ENCODE measurements at regions of chr3 and their contacts with region 1.

Region 1: DNA sequence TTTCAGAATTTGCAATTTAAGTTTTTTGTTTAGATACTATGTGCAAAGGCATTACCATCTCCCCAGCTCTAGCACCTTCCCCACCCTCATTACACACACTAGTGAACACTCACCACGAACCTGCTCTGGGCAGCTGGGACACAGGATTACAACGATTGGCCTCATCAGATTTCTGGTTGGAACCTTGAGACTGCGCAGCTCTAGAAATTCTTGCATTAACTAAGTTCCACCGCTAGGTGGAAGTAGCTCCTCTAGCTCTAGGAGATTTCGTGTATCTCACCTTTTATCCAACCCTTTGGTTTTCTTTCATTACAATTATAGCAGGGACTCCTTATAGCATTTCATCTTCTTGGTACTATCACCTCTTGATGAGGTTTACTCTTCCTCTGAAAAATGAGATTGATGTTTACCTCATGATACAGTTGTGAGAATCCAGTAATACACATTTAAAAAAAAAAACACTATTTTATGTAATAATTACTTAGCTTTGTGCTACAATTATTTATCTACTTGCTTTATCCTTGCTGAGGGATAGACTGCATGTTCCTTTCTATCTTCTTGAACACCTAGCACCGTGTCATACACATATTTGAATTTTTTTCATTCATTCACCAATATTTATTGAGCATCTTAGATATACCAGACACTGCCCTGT is 28.7 kb upstream of the PLOD2 start:
- DNase-seq: no peak
- H3K4me3 ChIP-seq: no peak overlapping the region
- CTCF ChIP-seq: peak; percentile 57

Region 2: GRCh38 chr3:146026547-146026946 is 163.1 kb before region 1 on chr3:
- CTCF ChIA-PET with region 1: interaction called, 10 read pairs
- POLR2A ChIA-PET with region 1: no interaction called
- DNase-seq: no peak
- H3K4me3 ChIP-seq: no peak overlapping the region
- CTCF ChIP-seq: no peak

Region 3: DNA sequence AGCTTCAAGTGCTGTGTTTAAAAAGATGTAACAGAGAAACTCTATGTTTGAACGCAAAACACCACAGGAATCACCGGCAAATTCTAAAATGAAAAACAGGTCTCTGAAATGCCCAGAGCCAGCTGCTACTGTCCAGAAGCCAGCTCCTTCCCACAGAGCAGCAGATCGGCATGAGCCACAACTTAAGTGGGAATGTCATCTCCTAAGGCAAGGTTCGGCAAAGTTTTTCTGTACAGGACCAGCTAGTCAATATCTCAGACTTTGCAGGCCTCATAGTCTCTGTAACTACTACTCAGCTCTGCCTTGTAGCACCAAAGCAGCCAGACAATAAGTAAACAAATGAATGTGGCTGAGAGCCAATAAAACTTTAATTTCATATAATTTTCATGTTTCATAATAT is 33.6 kb before region 1 on chr3:
- CTCF ChIA-PET with region 1: interaction called, 43 read pairs
- POLR2A ChIA-PET with region 1: interaction called, 4 read pairs
- DNase-seq: no peak
- H3K4me3 ChIP-seq: peak overlapping the region; percentile 38
- CTCF ChIP-seq: no peak

Region 4: DNA sequence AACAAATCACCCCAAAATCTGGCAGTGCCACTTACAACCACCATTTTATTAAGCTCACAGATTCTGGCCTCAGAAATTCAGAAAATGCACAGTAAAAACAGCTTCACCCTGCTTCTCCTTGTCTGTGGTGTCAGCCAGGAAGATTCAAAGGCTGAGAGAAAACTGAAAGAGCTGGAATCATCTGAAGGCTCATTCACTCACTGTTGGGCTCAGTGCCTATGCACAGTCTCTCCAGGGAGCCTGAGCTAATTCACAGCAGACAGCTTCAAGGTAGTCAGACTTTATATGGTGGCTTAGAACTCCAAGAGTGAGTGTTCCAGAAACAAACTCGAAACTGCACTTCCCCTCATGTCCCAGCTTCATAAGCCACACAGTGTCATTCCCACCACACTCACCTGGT is 12.1 kb before region 1 on chr3:
- CTCF ChIA-PET with region 1: interaction called, 56 read pairs
- POLR2A ChIA-PET with region 1: no interaction called
- DNase-seq: no peak
- H3K4me3 ChIP-seq: no peak overlapping the region
- CTCF ChIP-seq: no peak

Region 5: DNA sequence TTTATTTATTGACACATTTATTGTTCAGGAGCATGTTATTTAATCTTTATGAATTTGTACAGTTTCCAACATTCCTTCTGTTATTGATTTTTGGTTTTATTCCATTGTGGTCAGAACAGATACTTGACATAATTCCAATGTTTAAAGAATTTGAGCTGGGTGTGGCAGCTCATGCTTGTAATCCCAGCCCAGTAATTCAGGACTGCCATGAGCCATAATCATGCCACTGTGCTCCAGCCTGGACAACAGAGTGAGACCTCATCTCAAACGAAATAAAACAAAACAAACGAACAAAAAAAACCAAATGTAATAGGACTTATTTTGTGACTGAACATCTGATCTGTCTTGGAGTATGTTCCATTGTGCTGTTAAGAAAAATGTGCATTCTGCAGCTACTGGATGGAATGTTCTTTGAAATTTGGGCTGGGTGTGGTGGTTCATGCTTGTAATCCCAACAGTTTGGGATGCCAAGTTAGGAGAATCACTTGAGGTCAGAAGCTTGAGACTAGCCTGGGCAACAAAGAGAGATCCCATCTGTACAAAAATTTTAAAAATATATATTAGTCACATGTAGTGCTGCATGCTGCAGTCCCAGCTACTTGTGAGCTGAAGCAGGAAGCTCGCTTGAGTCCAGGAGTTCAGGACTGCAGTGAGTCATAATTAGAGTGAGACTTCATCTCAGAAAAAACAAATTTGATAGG is 123.9 kb after region 1 on chr3:
- CTCF ChIA-PET with region 1: interaction called, 14 read pairs
- POLR2A ChIA-PET with region 1: interaction called, 4 read pairs
- DNase-seq: peak; percentile 57
- H3K4me3 ChIP-seq: no peak overlapping the region
- CTCF ChIP-seq: no peak

Region 6: GRCh38 chr3:146589899-146590508 is 400.4 kb after region 1 on chr3:
- CTCF ChIA-PET with region 1: interaction called, 27 read pairs
- POLR2A ChIA-PET with region 1: no interaction called
- DNase-seq: no peak
- H3K4me3 ChIP-seq: no peak overlapping the region
- CTCF ChIP-seq: peak; percentile 28